Dorsolateral prefrontal cortex (tissue), 120 donors: ENCODE measurements at regions of chr14 and their contacts with region 1.

Region 1: GRCh38 chr14:55579724-55580469 is at the start of gene KTN1:
- DNase-seq: peak; percentile 53 to 87 (median 73)
- H3K4me3 ChIP-seq: peak within 1 kb of the TSS; percentile 71 to 98 (median 91)
- H3K27ac ChIP-seq: peak within 1 kb of the TSS; percentile 51 to 94 (median 87)
- H3K27me3 ChIP-seq: no peaks in the 10 kb centered on the region
- CTCF ChIP-seq: peak in 6 of 56 donors; percentile 8 to 22 (median 16)
- total RNA-seq, gene KTN1: 93.3 to 193 (median 136) TPM

Region 2: DNA sequence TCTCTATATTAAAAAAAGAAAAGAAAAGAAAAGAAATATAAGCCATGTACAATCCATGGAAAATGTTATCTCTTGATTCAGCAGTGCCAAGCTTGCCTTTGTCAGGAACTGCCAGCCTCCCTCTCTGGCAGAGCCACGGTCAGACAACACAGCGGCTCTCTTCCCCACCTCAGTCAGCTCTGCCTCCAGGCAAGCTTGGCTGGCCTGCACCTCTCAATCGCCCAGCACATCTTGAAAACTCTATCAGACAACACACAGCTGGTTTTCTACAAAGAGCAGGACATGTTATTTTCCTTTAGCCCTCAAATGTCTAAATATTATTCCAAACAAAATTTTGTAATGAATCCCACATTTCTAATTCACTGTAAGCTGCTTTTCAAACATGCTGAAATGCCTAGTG is 657.3 kb before region 1 on chr14:
- intact Hi-C with region 1: no loop called
- DNase-seq: no peak
- H3K4me3 ChIP-seq: no peak overlapping the region
- H3K27ac ChIP-seq: no peak overlapping the region
- H3K27me3 ChIP-seq: no peaks in the 10 kb centered on the region
- CTCF ChIP-seq: no peak

Region 3: DNA sequence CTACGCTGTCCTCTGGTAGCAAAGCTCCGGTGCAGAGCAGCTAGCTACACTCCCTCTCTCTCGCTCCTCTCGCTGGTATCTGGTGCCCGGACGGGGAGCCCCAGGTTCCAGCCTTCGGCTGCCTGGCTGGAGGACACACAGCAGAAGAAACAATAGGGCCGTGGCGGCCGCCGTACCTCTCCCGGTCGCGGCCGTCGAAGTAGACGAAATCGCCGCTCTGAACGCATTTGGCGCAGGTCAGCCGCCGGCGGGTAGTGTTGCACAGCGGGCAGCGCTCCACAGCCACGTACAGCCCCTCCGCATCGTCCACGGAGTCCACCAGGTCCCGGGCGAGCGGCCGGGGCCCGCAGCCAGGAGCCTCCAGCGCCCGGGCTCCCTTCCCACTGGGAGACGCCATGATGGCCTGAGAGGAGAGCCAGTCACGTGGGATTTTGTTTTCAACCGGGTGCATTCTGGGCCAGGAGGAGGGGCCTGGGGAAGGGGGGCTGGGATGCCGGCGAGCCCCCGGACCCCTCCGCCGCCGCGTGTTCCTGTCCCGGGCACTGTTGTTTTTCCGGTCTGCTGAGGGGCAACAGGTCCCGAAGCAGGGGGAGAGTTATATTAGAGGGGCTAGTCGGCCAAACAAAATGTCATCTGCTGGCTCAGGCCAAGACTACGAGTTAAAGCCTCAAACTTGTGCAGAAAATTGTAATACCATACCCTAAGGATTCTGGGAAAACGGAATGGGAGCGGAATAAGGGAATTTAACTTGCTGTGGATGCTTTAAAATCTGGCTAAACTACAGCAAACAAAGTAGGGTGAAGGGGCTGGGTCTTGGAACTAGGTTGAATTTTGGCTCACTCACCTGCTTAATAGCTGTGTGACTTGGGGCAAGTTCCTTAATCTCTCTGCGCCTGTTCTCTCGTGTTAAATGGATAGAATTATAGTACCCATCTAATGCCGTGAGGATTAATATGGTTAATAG is 168.2 kb before region 1 on chr14 and contains the start of gene ATG14:
- intact Hi-C with region 1: loop called in 1 of 2 experiments (anchors 5 kb)
- DNase-seq: peak; percentile 81 to 92 (median 88)
- H3K4me3 ChIP-seq: peak within 1 kb of the TSS; percentile 71 to 100 (median 96)
- H3K27ac ChIP-seq: peak within 1 kb of the TSS; percentile 58 to 98 (median 91)
- H3K27me3 ChIP-seq: no peaks in the 10 kb centered on the region
- CTCF ChIP-seq: peak in 30 of 56 donors; percentile 4 to 57 (median 31)
- total RNA-seq, gene ATG14: 8.6 to 22.0 (median 14.1) TPM

Region 4: DNA sequence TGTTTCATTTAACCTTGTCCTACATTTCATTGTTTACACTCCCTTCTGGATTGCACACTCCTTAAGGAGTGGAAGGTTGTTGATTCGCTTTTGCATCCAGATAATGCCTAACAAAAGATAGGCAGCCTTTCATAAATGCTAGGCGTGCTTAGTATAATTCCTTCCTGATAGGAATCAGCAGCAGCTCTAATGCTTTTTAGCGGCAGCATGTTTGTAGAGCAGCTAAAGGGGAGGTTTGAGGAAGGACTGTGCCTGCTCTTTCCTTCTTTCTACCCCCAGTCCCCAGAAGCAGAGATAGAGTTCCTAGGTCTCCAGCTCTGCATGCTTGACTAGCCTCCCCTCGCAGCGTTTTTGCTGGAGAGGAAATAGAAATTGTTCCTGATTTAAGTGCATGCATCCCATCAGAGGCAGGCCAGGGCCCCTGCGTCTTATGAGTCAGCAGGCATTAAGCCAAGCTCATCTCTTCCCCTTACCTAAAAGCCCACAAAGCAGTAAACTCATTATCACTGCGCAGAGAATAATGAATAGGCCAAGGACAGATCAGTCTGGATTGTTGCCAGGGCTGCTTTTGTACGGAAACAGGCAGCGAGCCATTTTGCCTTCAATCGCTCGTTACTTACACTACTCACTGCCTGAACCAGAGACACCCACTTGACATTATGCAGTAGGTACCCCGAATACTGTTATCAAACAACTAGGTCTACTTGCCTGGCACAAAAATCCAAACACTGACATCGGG is 125.5 kb before region 1 on chr14:
- intact Hi-C with region 1: loop called in 1 of 2 experiments (anchors 10 kb)
- DNase-seq: peak in 3 of 10 donors; percentile 7 to 28 (median 21)
- H3K4me3 ChIP-seq: peak overlapping the region in 40 of 59 donors; percentile 1 to 51 (median 22)
- H3K27ac ChIP-seq: peak overlapping the region in 11 of 59 donors; percentile 2 to 52 (median 8)
- H3K27me3 ChIP-seq: no peaks in the 10 kb centered on the region
- CTCF ChIP-seq: no peak

Region 5: DNA sequence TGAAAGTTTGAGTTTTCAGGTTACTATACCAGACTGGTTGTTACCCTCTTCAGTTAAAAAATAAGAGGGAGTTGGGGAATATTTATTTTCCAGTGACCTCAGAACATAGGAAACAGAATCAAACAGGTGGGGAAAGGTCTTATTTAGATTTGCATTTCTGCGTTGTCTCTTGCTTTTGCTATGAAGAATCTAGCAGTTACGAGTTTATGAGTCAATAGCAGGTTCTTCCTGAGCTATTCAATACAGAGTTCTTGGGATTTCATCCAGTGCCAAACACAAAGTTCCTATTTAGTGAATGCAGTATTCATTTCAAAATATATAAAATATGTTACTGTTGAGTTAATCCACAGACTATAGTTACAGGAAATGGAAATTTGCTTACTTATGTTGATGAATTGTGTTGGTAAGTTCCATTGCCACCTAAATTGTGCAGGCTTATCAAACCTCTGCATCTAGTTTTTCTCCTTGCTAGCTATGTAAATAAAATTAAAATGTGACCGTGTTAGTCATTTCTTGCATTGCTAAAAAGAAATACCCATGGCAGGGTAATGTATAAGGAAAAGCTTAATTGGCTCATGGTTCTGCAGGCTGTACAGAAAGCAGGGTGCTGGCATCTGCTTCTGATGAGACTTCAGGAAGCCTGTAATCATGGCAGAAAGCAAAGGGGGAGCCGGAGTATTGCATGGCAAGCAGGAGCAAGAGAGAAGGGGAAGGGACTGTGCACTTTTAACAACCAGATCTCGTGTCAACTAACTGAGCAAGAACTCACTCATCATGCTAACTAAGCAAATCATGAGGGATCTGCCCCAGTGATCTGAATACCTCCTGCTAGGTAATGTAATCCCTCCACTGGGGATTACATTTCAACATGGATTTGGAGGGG is 110.3 kb after region 1 on chr14:
- intact Hi-C with region 1: no loop called
- DNase-seq: no peak
- H3K4me3 ChIP-seq: no peak overlapping the region
- H3K27ac ChIP-seq: no peak overlapping the region
- H3K27me3 ChIP-seq: no peaks in the 10 kb centered on the region
- CTCF ChIP-seq: no peak